Activated T-helper 2 cell treated with anti-CD3 and anti-CD28 coated beads, Interferon-gamma antibody, Interleukin-2, Interleukin-4, amounts not matched to agents 10 μg/mL and 5 μg/mL and 100 μg/mL, durations not matched to agents 14 hours and 24 hours and 36 hours (primary cell): ENCODE measurements at regions of chr6 and their contacts with region 1.

Region 1: GRCh38 chr6:1381481-1382330 is 7.7 kb upstream of the FOXF2 start:
- DNase-seq: peak; percentile 46
- H3K4me3 Mint-ChIP-seq: no peak overlapping the region
- H3K27ac Mint-ChIP-seq: no peak overlapping the region
- H3K4me1 Mint-ChIP-seq: peaks cover 24% of the 10 kb centered on the region
- H3K27me3 Mint-ChIP-seq: peaks cover 73% of the 10 kb centered on the region

Region 2: DNA sequence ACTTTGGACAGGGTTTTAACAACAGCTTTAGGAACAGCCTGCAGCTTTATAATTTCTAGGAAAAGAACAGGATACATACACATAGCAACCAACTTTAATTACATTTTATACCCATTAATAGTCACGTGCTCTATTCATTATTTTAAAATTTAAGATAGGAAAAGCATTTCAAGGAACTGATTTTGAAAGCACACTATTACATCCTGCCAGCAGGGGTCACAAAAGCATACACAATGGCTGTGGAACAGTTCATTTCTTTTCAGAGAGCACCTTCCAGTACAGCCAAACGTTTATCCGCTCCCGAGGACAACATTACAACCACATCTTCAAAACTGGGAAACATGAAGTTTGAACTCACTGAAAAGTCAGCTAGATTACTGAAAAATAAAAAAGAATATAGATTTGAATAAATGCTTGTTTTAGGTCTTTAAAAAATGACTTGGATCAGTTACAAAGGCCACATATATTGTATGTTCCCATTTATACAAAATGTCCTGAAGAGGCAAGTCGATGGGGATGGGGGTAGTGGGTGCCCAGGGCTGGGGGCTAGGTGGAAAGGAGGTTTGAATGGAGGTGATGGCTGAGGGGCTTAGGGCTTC is 584.1 kb before region 1 on chr6:
- intact Hi-C with region 1: loop called (anchors 1 kb)
- DNase-seq: no peak
- H3K4me3 Mint-ChIP-seq: no peak overlapping the region
- H3K27ac Mint-ChIP-seq: no peak overlapping the region
- H3K4me1 Mint-ChIP-seq: no peaks in the 10 kb centered on the region
- H3K27me3 Mint-ChIP-seq: peaks cover 67% of the 10 kb centered on the region

Region 3: GRCh38 chr6:1062786-1063545 is 318.7 kb before region 1 on chr6:
- intact Hi-C with region 1: no loop called
- DNase-seq: no peak
- H3K4me3 Mint-ChIP-seq: no peak overlapping the region
- H3K27ac Mint-ChIP-seq: no peak overlapping the region
- H3K4me1 Mint-ChIP-seq: no peaks in the 10 kb centered on the region
- H3K27me3 Mint-ChIP-seq: peaks cover 3% of the 10 kb centered on the region

Region 4: GRCh38 chr6:1311400-1312202 is 70.1 kb before region 1 on chr6 and contains the start of gene FOXQ1:
- intact Hi-C with region 1: loop called (anchors 1 kb)
- DNase-seq: no peak
- H3K4me3 Mint-ChIP-seq: peak within 1 kb of the TSS; percentile 67
- H3K27ac Mint-ChIP-seq: peak within 1 kb of the TSS; percentile 42
- H3K4me1 Mint-ChIP-seq: peaks cover 9% of the 10 kb centered on the region
- H3K27me3 Mint-ChIP-seq: peaks cover 73% of the 10 kb centered on the region
- total RNA-seq, gene FOXQ1: not detected in 2 replicates

Region 5: GRCh38 chr6:1396952-1397868 is 15.5 kb after region 1 on chr6:
- intact Hi-C with region 1: loop called (anchors 1 kb)
- DNase-seq: peak; percentile 50
- H3K4me3 Mint-ChIP-seq: no peak overlapping the region
- H3K27ac Mint-ChIP-seq: no peak overlapping the region
- H3K4me1 Mint-ChIP-seq: peaks cover 9% of the 10 kb centered on the region
- H3K27me3 Mint-ChIP-seq: peaks cover 56% of the 10 kb centered on the region